ENCODE measurements at regions of chr9 and their contacts with region 1.

Region 1: DNA sequence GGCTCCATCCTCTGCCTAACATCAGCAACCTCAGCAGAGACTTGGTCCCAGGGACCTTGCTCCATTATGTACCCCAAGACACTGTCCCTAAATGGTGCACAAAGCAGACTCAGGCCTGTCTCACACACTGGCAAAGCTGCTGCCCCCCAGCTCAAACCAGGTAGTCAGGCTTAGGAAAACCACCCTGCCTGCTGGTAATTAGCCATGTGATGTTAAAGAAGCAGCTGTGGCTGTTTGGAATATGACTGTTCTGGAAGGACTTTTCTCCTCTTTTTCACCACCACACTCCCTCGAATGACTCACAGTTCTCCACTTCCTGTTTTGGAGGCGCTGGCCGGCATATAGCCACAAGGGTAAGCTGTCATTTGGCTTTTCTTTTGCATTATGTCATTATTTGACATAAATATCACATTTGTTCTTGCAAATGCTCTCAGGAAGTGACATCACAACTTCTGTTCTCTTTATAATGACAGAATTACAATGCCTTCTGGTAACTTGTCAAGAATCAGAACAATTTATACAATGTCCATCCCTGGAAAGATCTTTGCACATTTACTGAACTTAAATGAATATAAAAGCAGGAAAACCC is 113.9 kb downstream of the SUSD1 start:
- DNase-seq: peak; percentile 92
- H3K4me3 ChIP-seq: no peak overlapping the region
- H3K27ac ChIP-seq: peak overlapping the region; percentile 98
- H3K27me3 ChIP-seq: no peaks in the 10 kb centered on the region
- CTCF ChIP-seq: no peak; the same call in 1 of the 2 replicates

Region 2: DNA sequence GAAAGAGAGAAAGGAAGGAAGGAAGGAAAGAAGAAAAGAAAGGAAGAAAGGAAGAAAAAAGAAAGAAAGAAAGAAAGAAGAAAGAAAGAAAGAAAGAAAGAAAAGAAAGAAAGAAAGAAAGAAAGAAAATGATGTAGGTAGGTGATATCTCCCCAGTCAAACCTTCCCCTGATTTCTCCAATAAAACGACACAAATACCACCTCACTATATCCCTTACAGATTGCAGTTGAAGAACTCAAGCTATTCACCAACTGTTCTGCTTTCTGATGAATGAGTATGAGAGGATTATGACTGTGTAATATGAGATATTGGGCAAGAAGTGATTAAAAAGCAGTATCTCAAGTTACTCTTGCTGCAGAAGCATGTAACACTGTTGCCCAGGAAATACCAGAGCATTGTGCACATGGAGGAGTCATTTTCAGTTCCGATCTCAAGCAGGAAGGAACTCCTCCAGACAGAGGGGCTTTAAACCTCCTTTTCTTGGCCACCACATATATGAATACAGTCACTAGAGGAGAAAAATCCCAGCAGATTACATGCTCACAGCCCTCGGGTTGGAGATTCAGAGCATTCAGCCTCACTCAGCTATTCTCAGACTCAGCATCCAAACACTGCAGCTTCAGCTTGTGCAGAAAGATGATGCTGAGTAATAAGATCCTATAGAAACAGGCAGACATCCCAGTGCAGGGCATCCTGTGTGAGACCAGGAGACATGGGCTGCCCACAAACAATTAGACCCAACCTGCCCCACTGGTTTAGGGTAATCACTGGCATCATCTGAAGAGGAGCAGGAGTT is 103.2 kb before region 1 on chr9:
- CTCF ChIA-PET with region 1: no interaction called
- POLR2A ChIA-PET with region 1: interaction called, 10 read pairs
- DNase-seq: peak; percentile 91
- H3K4me3 ChIP-seq: peak overlapping the region; percentile 52
- H3K27ac ChIP-seq: peak overlapping the region; percentile 93
- H3K27me3 ChIP-seq: no peaks in the 10 kb centered on the region
- CTCF ChIP-seq: no peak

Region 3: GRCh38 chr9:112041536-112042243 is 19.6 kb before region 1 on chr9:
- CTCF ChIA-PET with region 1: interaction called, 3 read pairs
- POLR2A ChIA-PET with region 1: interaction called, 14 read pairs
- DNase-seq: peak; percentile 99
- H3K4me3 ChIP-seq: no peak overlapping the region
- H3K27ac ChIP-seq: peak overlapping the region; percentile 95
- H3K27me3 ChIP-seq: no peaks in the 10 kb centered on the region
- CTCF ChIP-seq: no peak

Region 4: DNA sequence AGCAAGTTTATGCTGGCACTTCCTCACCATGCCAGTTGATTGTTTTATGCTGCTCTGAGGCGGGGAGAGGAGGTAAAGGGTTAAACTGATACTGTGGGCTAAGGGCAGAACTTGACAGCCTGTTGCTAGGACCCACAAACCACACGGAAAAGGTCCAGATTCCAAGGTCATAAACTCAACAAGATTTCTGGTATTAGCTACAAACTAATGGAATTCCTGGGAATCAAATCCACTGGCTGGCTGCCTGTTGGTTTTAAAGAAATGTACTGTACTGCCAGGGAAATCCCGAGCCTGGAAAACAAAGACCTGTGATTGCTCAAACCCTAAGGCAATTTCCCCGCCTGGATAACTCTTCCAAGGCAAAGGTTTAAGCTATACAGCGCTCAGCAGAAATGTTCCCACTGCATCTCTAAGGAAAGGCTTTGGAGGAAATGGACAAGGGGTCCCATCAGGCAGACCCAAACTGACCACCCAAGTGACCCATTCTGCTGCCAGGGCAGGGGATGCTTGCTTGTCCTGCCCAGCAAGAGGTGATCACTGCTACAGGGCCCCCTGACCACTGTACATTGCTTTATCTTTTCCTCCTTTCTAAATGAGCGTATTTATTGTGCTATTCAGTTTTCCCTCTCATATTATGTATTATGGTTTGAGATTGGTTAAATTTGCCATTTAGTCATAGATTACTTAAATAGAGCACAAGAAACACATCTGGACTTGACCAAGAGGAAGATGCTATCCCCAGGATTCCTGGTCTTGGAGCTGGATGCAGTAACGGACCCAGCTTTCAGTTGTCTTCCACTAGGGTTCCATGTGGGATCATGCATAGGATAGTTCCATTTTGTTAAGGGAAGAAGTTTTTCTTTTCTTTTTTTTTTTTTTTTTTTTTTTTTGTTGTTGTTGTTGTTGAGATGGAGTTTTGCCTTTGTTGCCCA is 10.4 kb before region 1 on chr9:
- CTCF ChIA-PET with region 1: interaction called, 3 read pairs
- POLR2A ChIA-PET with region 1: interaction called, 18 read pairs
- DNase-seq: peak; percentile 92
- H3K4me3 ChIP-seq: no peak overlapping the region
- H3K27ac ChIP-seq: peak overlapping the region; percentile 97
- H3K27me3 ChIP-seq: no peaks in the 10 kb centered on the region
- CTCF ChIP-seq: no peak

Region 5: DNA sequence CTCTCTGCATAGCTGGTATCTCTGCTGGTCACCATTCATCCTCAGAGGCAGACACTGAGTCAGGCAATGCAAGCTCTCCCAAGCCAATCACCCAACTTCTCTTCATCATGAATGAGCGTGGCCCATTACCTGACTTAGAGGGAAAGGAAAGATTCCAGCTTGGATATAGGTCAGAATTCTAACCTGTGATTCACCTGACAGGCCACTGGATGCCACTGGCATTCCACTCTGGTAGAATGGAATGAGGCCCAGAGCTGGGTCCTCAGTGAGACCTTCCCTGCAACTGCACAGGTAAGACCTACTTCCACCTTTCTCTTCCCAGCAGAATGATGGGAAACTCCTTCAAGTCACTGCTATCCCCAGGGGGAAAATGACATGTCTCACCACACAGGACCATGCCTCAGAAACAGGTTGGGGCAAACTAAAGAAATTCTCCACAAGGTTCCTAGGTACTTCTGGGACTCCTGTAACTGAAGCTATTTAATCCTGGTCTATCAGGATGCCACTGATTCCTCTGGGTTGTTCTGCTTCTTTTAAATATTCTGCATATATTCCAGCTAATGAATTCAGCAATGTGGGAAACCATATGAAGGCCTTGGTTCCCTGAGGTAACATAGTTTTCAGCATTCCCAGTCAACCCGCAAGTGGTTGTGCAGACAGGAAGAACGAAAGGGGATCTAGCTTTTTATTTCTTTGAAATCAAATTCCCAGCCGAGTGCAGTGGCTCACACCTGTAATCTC is 51.9 kb after region 1 on chr9:
- CTCF ChIA-PET with region 1: no interaction called
- POLR2A ChIA-PET with region 1: no interaction called
- DNase-seq: no peak
- H3K4me3 ChIP-seq: no peak overlapping the region
- H3K27ac ChIP-seq: no peak overlapping the region
- H3K27me3 ChIP-seq: no peaks in the 10 kb centered on the region
- CTCF ChIP-seq: peak; percentile 34; the same call in 1 of the 2 replicates